Activated CD4-positive, alpha-beta T cell treated with anti-CD3 and anti-CD28 coated beads for 36 hours (primary cell): ENCODE measurements at regions of chr13 and their contacts with region 1.

Region 1: DNA sequence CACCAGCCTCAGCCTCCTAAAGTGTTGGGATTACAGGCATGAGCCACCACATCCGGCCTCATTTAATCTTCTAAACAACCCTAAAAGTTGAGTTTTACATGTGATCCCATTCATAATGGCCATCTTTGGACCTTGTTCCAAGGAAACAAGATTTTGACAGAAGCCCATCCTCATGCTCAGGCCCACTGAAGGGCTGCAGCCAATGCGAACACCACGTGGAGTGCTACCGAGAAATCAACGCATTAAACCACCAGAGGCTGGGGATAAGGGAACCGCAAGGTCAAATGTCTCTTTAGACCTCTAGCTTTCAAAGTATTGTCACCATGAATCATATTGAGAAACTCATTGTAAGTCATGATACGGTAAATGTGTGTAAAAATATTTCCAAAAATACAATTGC is 49.4 kb upstream of the DOCK9 start:
- DNase-seq: peak; percentile 46
- ATAC-seq: peak; percentile 41
- H3K4me3 Mint-ChIP-seq: no peak overlapping the region
- H3K27ac Mint-ChIP-seq: peak overlapping the region; percentile 91
- H3K4me1 Mint-ChIP-seq: peaks cover 85% of the 10 kb centered on the region
- H3K27me3 Mint-ChIP-seq: no peaks in the 10 kb centered on the region

Region 2: DNA sequence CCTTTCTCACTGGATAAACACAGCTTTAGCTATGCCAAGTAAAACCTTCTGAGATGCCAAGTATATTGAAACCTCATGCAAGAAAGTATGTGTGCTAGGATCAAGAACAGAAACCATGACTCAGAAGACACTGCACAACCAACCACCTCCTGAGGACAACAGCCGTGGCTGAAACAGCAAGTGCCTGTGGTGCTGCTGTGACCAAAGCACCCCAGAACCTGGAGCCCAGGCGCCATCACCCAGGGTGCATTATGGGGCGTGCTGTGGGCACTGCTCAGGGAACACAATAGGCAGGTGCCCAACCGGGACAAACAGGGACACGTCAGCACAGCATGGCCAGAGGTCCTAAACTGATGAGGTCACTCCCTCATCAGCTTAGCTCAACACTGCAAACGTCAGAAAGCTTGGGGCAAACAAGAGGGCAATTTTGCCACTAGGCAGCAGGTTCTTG is 173.5 kb before region 1 on chr13:
- CTCF ChIA-PET with region 1: no interaction called
- POLR2A ChIA-PET with region 1: interaction called, 5 read pairs
- intact Hi-C with region 1: loop called in 1 of 2 experiments (anchors 1 kb)
- DNase-seq: peak; percentile 88
- ATAC-seq: peak; percentile 99
- H3K4me3 Mint-ChIP-seq: no peak overlapping the region
- H3K27ac Mint-ChIP-seq: peak overlapping the region; percentile 41
- H3K4me1 Mint-ChIP-seq: peaks cover 14% of the 10 kb centered on the region
- H3K27me3 Mint-ChIP-seq: no peaks in the 10 kb centered on the region

Region 3: GRCh38 chr13:98998831-98999638 is 28.2 kb before region 1 on chr13:
- CTCF ChIA-PET with region 1: interaction called, 4 read pairs
- POLR2A ChIA-PET with region 1: no interaction called
- intact Hi-C with region 1: loop called (anchors 1 to 2 kb)
- DNase-seq: peak; percentile 57
- ATAC-seq: peak; percentile 80
- H3K4me3 Mint-ChIP-seq: peak overlapping the region; percentile 32
- H3K27ac Mint-ChIP-seq: peak overlapping the region; percentile 70
- H3K4me1 Mint-ChIP-seq: peaks cover 94% of the 10 kb centered on the region
- H3K27me3 Mint-ChIP-seq: no peaks in the 10 kb centered on the region

Region 4: GRCh38 chr13:99046851-99047250 is 19.6 kb after region 1 on chr13:
- CTCF ChIA-PET with region 1: interaction called, 35 read pairs
- POLR2A ChIA-PET with region 1: no interaction called
- intact Hi-C with region 1: loop called (anchors 2 kb)
- DNase-seq: no peak
- ATAC-seq: no peak
- H3K4me3 Mint-ChIP-seq: peak overlapping the region; percentile 64
- H3K27ac Mint-ChIP-seq: peak overlapping the region; percentile 93
- H3K4me1 Mint-ChIP-seq: peaks cover 87% of the 10 kb centered on the region
- H3K27me3 Mint-ChIP-seq: no peaks in the 10 kb centered on the region

Region 5: GRCh38 chr13:99051768-99052455 is 24.7 kb after region 1 on chr13:
- CTCF ChIA-PET with region 1: interaction called, 35 read pairs
- POLR2A ChIA-PET with region 1: no interaction called
- intact Hi-C with region 1: loop called (anchors 2 kb)
- DNase-seq: no peak
- ATAC-seq: peak; percentile 16
- H3K4me3 Mint-ChIP-seq: peak overlapping the region; percentile 15
- H3K27ac Mint-ChIP-seq: peak overlapping the region; percentile 44
- H3K4me1 Mint-ChIP-seq: peaks cover 75% of the 10 kb centered on the region
- H3K27me3 Mint-ChIP-seq: no peaks in the 10 kb centered on the region

Region 6: GRCh38 chr13:99075268-99076191 is 48.3 kb after region 1 on chr13:
- CTCF ChIA-PET with region 1: interaction called, 8 read pairs
- POLR2A ChIA-PET with region 1: no interaction called
- intact Hi-C with region 1: loop called in 1 of 2 experiments (anchors 2 kb)
- DNase-seq: no peak
- ATAC-seq: peak; percentile 87
- H3K4me3 Mint-ChIP-seq: peak overlapping the region; percentile 51
- H3K27ac Mint-ChIP-seq: peak overlapping the region; percentile 93
- H3K4me1 Mint-ChIP-seq: peaks cover 70% of the 10 kb centered on the region
- H3K27me3 Mint-ChIP-seq: no peaks in the 10 kb centered on the region

Region 7: DNA sequence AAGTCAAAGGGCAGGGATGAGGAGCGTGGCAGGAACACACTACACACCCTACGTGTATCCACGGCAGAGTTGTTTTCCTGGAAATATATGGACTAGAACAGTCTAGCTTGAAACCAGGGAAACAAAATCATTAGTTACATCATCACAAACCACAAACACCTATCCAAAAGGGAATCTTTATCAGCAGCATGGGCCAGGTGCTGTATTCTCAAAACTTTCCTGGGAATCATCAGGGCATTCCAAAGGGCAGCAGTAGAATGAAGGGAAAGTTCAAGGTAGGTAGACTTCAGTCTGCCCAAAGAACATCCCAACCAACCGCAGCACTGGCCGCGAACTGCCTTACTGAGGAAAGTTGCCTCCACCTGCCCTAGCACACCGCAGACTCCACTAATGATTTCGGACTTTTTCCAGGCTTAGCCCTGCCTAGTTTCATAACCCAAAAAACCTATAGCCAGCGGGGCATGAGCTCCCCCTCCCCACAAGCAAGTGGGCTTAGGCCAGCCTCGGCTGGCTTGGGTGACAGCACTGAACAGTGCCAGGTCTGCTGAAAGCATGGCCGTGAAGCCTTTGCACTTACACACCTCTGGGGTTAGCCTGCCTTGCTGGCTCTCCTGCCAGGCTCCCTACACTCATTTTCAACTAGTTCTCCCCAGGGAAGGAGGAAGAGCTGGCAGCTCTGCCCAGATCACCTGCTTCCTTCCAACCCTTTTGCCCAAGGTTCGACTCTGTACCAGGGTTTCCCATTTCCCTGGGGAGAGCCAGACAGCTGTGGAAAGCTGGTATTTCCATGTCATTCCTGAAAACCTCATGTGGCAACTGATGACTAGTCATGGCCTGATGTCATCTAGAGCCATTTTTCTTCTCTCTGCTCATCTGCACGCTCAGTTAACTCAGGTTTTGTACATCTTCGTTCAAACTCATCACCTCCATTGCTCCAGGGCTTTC is 96.1 kb after region 1 on chr13:
- CTCF ChIA-PET with region 1: no interaction called
- POLR2A ChIA-PET with region 1: no interaction called
- intact Hi-C with region 1: no loop called
- DNase-seq: no peak
- ATAC-seq: no peak
- H3K4me3 Mint-ChIP-seq: no peak overlapping the region
- H3K27ac Mint-ChIP-seq: no peak overlapping the region
- H3K4me1 Mint-ChIP-seq: peaks cover 52% of the 10 kb centered on the region
- H3K27me3 Mint-ChIP-seq: no peaks in the 10 kb centered on the region